ENCODE measurements at regions of chr20 and their contacts with region 1.

Region 1: DNA sequence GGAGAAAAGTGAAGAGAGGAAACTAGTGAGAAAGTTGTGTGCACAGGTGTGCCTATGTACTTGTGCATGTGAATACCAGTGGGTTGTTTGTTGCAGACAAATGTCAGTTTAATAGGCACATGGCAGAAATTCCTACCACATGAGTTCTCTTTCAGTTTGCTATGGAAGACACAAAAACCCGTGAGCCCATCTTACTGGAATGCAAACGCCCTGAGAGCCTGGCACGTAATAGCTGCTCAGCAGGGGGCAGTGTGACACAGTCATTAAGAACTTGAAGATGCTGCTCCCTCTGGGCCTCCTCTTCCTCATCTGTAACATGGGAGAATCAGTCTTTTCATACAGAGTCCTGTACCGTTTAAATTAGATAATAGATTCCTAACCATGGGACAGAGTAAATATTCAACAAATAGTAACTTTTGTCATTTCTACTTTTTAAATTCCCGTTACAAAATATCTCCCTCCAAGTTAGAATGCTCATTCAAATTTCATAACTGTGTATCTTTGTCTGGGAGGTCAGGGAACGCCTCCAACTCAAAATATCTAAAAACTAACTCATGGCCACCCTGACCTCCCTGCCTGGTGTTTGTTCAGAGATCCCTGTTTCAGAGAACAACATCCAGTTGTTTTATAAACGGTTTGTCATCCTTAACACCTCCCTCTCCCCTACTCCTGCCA is 802.9 kb downstream of the MAFB start:
- DNase-seq: peak; percentile 92

Region 2: DNA sequence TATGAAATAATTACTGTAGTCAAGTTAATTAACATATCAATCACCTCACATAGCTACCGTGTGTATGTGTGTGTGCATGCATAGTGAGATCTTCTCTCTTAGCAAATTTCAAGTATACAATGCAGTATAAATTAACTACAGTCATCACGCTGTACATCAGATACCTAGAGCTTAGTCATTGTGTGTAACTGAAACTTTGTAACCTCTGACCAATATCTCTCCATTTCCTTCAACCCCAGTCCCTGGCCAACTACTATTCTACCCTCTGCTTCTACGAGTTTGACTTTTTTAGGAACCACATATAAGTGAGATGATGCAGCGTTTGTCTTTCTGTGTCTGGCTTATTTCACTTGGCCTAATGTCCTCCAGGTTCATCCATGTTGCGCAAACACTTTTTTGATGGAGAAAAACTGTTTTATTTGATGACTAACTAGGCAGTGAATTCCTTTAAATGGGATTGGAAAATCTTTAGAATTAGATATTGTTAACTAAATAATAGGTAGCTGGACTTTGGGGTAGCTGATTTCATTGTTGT is 464.5 kb before region 1 on chr20:
- intact Hi-C with region 1: no loop called
- DNase-seq: no peak

Region 3: DNA sequence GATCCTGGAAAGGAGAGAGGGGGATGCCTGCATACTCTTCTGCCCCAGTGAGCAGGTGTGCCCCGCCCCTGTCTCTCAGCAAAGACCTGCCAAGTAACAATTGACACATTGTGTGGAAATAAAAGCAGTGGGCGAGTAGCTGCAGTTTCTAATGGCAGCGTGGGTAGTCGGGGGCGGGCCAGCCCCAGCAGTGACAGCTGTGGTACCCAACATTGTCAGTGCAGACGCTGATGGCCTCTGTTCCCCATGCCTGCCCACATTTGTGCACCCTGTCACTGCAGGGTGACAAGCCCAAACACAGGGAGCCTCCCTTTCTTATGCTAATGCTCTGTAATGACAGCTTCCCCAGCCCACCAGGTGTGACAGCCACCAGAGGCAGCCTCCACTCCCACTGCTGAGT is 432.2 kb before region 1 on chr20:
- intact Hi-C with region 1: no loop called
- DNase-seq: no peak

Region 4: GRCh38 chr20:39910536-39910935 is 24.4 kb after region 1 on chr20:
- intact Hi-C with region 1: no loop called
- DNase-seq: no peak

Region 5: GRCh38 chr20:40956542-40957264 is 1070.6 kb after region 1 on chr20:
- intact Hi-C with region 1: loop called (anchors 5 to 10 kb)
- DNase-seq: no peak

Measured in posterior vena cava (tissue), 2 donors.